Sigmoid colon (tissue), 7 donors: ENCODE measurements at regions of chr12 and their contacts with region 1.

Region 1: DNA sequence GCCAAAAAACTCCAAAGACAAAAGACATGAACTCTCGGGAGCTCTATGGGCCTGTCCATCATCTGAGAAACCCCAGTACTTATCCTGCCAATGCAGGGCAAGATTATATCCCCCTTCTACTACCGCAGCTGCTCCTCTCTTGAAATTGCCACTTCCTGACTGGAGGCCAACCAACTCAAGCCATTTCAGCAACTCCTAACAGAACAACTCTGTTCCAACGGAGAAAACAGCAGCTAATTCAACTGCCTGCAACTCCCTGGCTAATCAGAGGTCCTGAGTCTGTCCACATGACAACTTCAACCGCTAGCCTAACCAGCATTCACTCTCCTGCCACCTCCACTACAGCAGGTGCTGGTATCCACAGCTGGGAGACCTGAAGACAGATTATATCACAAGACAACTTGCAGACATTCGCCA is 24.1 kb downstream of the CEP83 start:
- DNase-seq: no peak
- H3K4me3 ChIP-seq: no peak overlapping the region
- H3K27ac ChIP-seq: no peak overlapping the region
- H3K4me1 ChIP-seq: peaks cover 0 to 8% (median 3%) of the 10 kb centered on the region in 4 donors
- H3K27me3 ChIP-seq: no peaks in the 10 kb centered on the region
- CTCF ChIP-seq: no peak
- EP300 ChIP-seq: no peak
- POLR2A ChIP-seq: no peak

Region 2: GRCh38 chr12:94133964-94134795 is 301.3 kb before region 1 on chr12:
- intact Hi-C with region 1: loop called (anchors 2 kb)
- DNase-seq: no peak
- H3K4me3 ChIP-seq: no peak overlapping the region
- H3K27ac ChIP-seq: no peak overlapping the region
- H3K4me1 ChIP-seq: no peaks in the 10 kb centered on the region
- H3K27me3 ChIP-seq: no peaks in the 10 kb centered on the region
- CTCF ChIP-seq: peak; percentile 34 to 76 (median 58)
- EP300 ChIP-seq: no peak
- POLR2A ChIP-seq: no peak

Region 3: DNA sequence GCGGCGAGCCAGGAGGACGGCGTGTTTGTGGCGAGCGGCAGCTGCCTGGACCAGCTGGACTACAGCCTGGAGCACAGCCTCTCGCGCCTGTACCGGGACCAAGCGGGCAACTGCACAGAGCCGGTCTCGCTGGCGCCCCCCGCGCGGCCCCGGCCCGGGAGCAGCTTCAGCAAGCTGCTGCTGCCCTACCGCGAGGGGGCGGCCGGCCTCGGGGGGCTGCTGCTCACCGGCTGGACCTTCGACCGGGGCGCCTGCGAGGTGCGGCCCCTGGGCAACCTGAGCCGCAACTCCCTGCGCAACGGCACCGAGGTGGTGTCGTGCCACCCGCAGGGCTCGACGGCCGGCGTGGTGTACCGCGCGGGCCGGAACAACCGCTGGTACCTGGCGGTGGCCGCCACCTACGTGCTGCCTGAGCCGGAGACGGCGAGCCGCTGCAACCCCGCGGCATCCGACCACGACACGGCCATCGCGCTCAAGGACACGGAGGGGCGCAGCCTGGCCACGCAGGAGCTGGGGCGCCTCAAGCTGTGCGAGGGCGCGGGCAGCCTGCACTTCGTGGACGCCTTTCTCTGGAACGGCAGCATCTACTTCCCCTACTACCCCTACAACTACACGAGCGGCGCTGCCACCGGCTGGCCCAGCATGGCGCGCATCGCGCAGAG is 286.3 kb before region 1 on chr12:
- intact Hi-C with region 1: loop called (anchors 5 kb)
- DNase-seq: no peak
- H3K4me3 ChIP-seq: peak overlapping the region; percentile 18 to 70 (median 62)
- H3K27ac ChIP-seq: peak overlapping the region in 2 of 4 donors; percentile 32 to 34
- H3K4me1 ChIP-seq: peaks cover 0 to 27% (median 25%) of the 10 kb centered on the region in 4 donors
- H3K27me3 ChIP-seq: peaks cover 0 to 23% (median 15%) of the 10 kb centered on the region in 3 donors
- CTCF ChIP-seq: peak in 1 of 4 experiments; percentile 16
- EP300 ChIP-seq: no peak
- POLR2A ChIP-seq: no peak

Region 4: GRCh38 chr12:94532490-94533422 is 97.2 kb after region 1 on chr12:
- intact Hi-C with region 1: loop called (anchors 5 kb)
- DNase-seq: peak; percentile 80
- H3K4me3 ChIP-seq: no peak overlapping the region
- H3K27ac ChIP-seq: no peak overlapping the region
- H3K4me1 ChIP-seq: peaks cover 0 to 6% (median 6%) of the 10 kb centered on the region in 4 donors
- H3K27me3 ChIP-seq: no peaks in the 10 kb centered on the region
- CTCF ChIP-seq: peak; percentile 57 to 78 (median 76)
- EP300 ChIP-seq: no peak
- POLR2A ChIP-seq: no peak